H1 (cell line): ENCODE measurements at regions of chr2 and their contacts with region 1.

Region 1: DNA sequence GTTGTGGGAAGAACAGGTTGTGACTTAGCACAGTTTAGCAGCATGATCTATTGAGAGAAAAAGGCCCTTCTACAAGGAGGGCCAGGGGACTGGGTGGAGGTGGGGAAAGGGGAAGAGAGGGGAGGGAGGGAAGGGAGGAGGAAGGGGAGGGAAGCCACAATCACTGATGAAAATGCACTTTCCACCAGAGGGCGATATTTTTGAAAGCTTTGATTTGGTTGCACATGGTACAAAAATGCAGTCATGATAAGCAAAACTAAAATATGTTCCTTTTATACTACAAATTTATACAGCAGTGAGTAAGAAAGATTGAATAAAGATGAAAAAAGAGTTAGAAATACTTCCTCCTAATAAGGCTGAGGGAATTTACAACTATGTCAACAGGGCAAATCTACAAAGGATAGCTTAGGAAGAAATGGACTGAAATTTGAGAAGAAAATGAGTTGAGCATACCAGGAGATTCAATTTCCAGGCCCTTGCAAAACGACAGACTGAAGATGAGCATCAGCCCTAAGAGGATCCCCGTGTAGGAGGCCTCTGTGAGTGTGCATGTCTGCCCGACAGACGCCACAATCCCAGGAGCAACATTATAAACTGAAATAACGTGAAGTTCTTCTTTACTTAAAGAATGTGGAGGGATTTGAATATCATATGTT is 17.2 kb downstream of the SH3YL1 start:
- DNase-seq: no peak
- H3K4me3 ChIP-seq: no peak overlapping the region
- H3K27ac ChIP-seq: no peak overlapping the region
- H3K4me1 ChIP-seq: no peaks in the 10 kb centered on the region
- H3K27me3 ChIP-seq: no peaks in the 10 kb centered on the region
- CTCF ChIP-seq: peak; percentile 22 to 54 (median 37)
- EP300 ChIP-seq: no peak
- POLR2A ChIP-seq: no peak
- RAD21 ChIP-seq: peak; percentile 35 to 40; a peak in 3 of 4 replicates

Region 2: DNA sequence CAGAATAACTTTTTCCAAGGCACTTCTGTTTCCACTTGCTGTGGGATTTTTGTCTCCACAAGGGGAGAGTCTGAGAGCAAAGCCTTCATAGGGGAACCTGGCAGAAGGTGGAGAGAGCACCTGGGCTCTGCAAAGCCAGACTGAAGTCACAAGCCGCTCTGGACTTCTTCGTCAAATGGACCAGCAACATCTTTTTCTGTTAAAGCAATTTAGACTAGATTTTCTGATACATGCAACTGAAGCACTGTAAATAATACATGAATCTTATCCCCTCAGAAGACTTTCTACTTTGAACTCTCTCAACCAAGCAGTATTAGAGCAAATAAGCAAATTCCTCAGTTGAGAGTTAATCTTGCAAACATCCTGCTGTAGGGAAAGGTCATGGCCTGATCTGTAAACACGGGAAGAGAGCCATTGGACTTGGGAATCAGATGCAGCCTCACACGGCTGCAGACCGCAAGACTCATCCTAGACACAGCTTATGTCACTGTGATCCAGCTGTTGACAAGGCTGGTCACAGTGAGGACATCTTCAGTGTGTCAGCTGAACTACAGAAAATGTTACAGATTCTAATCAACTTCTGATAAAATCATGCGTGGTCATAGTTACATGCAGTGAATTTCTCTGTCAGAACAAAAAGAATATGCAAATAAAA is 14.0 kb after region 1 on chr2:
- CTCF ChIA-PET with region 1: interaction called, 12 read pairs
- POLR2A ChIA-PET with region 1: interaction called, 7 read pairs
- DNase-seq: no peak
- H3K4me3 ChIP-seq: no peak overlapping the region
- H3K27ac ChIP-seq: no peak overlapping the region
- H3K4me1 ChIP-seq: peaks cover 0 to 5% (median 3%) of the 10 kb centered on the region in 4 experiments; a peak in 2 of 7 replicates
- H3K27me3 ChIP-seq: peaks cover 0 to 9% (median 5%) of the 10 kb centered on the region in 4 experiments; a peak in 5 of 7 replicates
- CTCF ChIP-seq: no peak
- EP300 ChIP-seq: no peak
- POLR2A ChIP-seq: no peak
- RAD21 ChIP-seq: no peak